Ovary (tissue), 10 donors: ENCODE measurements at regions of chr21 and their contacts with region 1.

Region 1: DNA sequence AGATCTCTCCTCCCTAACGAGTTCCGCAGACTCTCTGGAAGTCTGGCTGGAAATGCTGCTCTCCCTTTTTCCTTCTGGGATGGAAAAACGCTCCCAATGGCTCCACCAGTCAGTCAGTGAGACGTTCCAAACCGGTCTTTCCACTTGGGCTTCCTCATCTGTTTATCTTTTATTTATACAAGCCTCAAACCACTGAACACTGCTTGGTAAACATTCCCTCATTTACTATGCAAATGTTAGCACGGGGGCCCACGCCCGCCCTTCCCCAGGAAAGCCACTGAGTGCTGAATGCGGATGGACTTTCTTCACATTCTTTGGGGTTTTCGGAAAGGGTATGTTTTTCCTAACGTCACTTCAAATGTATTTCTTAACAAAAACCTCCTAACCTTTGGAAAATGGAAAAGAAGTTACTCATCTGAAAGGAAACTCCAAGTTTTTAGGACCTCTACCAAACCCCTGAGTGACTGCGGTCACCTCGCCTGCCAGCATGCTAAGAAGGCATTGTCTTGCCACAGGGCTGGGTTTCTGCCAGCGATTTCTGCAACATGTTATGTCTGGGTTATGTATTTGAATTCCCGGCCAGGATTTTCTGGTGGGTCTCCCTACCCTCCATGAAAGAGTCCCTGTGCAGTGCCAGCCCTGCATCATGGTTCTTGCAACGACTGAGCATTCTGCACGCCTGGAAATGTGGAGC is 14.0 kb upstream of the UMODL1 start:
- DNase-seq: no peak
- H3K4me3 ChIP-seq: no peak overlapping the region
- H3K27ac ChIP-seq: no peak overlapping the region
- H3K4me1 ChIP-seq: no peaks in the 10 kb centered on the region
- H3K27me3 ChIP-seq: no peaks in the 10 kb centered on the region
- CTCF ChIP-seq: no peak
- EP300 ChIP-seq: no peak
- POLR2A ChIP-seq: no peak

Region 2: GRCh38 chr21:42366321-42367009 is 309.3 kb after region 1 on chr21 and contains the start of gene TFF1:
- intact Hi-C with region 1: no loop called
- DNase-seq: no peak
- H3K4me3 ChIP-seq: no peak within 1 kb of the TSS
- H3K27ac ChIP-seq: no peak within 1 kb of the TSS
- H3K4me1 ChIP-seq: no peaks in the 10 kb centered on the region
- H3K27me3 ChIP-seq: no peaks in the 10 kb centered on the region
- CTCF ChIP-seq: no peak
- EP300 ChIP-seq: no peak
- POLR2A ChIP-seq: no peak
- total RNA-seq, gene TFF1: 1.4 TPM in 1 of 7 donors, not detected in the others

Region 3: GRCh38 chr21:42524349-42525151 is 467.4 kb after region 1 on chr21:
- intact Hi-C with region 1: loop called in 1 of 4 experiments (anchors 10 kb)
- DNase-seq: peak; percentile 76 to 85 (median 80)
- H3K4me3 ChIP-seq: peak overlapping the region; percentile 20
- H3K27ac ChIP-seq: peak overlapping the region; percentile 57 to 72
- H3K4me1 ChIP-seq: peaks cover 13% of the 10 kb centered on the region
- H3K27me3 ChIP-seq: no peaks in the 10 kb centered on the region
- CTCF ChIP-seq: no peak
- EP300 ChIP-seq: no peak
- POLR2A ChIP-seq: no peak

Region 4: DNA sequence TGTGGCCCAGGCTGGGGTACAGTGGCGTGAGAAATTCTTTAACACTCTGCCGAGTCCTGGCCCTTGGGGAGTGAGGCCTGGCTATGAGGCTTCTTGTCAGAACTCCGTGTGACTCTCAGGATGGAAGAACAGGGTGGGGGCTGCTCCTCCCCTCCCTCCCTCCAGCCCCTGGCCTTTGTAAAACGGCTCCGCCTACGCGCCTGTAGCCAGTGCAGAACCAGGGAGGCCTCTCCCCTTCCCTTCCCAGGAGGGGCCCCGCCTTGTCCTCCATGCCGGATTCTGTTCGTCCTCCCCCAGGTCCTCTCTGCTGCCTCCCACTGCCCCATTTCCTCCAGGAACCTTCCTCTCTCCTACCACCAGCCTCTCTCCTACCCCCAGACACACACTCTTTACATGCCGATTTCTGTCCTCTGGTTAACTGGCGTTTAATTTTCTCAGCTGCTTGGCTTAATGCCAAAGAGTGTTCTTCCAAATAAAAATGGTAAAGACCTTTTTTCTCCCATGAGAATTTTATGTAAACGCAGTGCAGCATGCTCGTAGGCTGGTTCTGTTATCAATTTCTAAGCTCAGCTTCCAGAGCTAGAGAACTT is 617.3 kb after region 1 on chr21:
- intact Hi-C with region 1: loop called in 1 of 4 experiments (anchors 5 kb)
- DNase-seq: peak; percentile 66 to 85 (median 69)
- H3K4me3 ChIP-seq: peak overlapping the region; percentile 4
- H3K27ac ChIP-seq: no peak overlapping the region
- H3K4me1 ChIP-seq: peaks cover 3% of the 10 kb centered on the region
- H3K27me3 ChIP-seq: no peaks in the 10 kb centered on the region
- CTCF ChIP-seq: no peak
- EP300 ChIP-seq: no peak
- POLR2A ChIP-seq: no peak